Activated CD4-positive, alpha-beta memory T cell treated with anti-CD3 and anti-CD28 coated beads for 36 hours (primary cell): ENCODE measurements at regions of chr6 and their contacts with region 1.

Region 1: DNA sequence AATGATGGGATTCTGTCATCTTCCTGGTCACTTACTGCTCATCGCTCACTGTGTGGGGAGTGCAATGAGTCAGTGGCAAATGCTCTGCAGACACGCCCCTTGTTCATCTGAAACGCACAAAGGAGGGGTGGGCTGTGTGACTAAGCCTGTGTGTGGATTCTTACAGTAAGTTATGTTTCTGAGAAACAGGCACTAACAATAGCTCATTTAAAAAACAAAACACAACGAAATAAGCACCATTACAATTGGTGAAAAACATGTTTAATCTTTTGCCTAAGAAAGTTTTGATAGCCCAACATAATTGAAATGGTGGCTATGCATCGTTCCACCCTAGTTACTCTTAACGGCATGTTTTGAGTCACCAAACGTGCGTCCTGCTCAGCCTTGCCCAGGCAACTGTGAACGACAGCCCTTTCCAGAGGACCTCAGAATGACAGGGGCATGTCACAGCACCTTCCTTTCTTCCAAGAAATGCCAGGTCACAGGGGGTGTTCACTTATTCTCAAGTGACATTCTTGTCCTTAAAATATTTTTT is 118.4 kb upstream of the SGK1 start:
- DNase-seq: peak; percentile 89
- H3K4me3 Mint-ChIP-seq: peak overlapping the region; percentile 58
- H3K27ac Mint-ChIP-seq: peak overlapping the region; percentile 87
- H3K4me1 Mint-ChIP-seq: peaks cover 38% of the 10 kb centered on the region
- H3K27me3 Mint-ChIP-seq: no peaks in the 10 kb centered on the region

Region 2: GRCh38 chr6:132813173-132813856 is 1623.0 kb before region 1 on chr6:
- CTCF ChIA-PET with region 1: no interaction called
- POLR2A ChIA-PET with region 1: no interaction called
- intact Hi-C with region 1: loop called (anchors 2 kb)
- DNase-seq: peak; percentile 68
- H3K4me3 Mint-ChIP-seq: peak overlapping the region; percentile 97
- H3K27ac Mint-ChIP-seq: peak overlapping the region; percentile 98
- H3K4me1 Mint-ChIP-seq: peaks cover 28% of the 10 kb centered on the region
- H3K27me3 Mint-ChIP-seq: peaks cover 2% of the 10 kb centered on the region

Region 3: GRCh38 chr6:134235937-134236751 is 200.2 kb before region 1 on chr6:
- CTCF ChIA-PET with region 1: no interaction called
- POLR2A ChIA-PET with region 1: no interaction called
- intact Hi-C with region 1: loop called (anchors 1 kb)
- DNase-seq: peak; percentile 22
- H3K4me3 Mint-ChIP-seq: peak overlapping the region; percentile 29
- H3K27ac Mint-ChIP-seq: peak overlapping the region; percentile 85
- H3K4me1 Mint-ChIP-seq: peaks cover 41% of the 10 kb centered on the region
- H3K27me3 Mint-ChIP-seq: no peaks in the 10 kb centered on the region

Region 4: DNA sequence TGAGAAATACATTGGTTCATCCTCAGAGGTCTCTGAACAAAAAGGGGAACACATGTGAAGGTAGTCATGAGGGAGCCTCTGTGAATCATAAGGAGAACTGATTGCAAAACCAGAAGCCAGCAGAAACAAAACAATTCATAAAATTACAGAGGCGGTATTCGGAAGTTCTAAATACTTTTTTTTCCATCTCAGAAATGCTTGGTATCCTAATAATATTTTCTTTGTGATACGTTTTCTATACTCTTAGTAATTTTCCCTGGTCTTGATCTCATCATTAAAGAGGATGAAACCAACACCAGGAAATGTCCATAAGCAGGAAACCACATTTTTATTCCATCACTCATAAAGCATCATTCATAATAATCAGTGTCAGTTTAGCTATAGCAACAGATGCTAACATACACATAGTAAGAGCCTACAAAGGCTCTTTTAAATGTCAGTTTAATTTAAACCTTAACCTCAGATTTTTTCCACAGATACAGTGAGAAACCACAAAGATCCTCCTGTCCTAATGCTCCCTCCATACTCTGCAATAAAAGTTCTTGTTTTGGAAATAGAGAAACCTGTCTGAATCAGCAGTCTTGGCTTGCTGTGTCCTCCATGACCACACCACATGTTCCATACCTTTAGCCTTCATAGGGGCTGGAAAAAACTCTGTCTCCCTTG is 147.7 kb before region 1 on chr6:
- CTCF ChIA-PET with region 1: no interaction called
- POLR2A ChIA-PET with region 1: interaction called, 6 read pairs
- intact Hi-C with region 1: loop called (anchors 1 kb)
- DNase-seq: peak; percentile 15
- H3K4me3 Mint-ChIP-seq: peak overlapping the region; percentile 21
- H3K27ac Mint-ChIP-seq: peak overlapping the region; percentile 85
- H3K4me1 Mint-ChIP-seq: peaks cover 22% of the 10 kb centered on the region
- H3K27me3 Mint-ChIP-seq: no peaks in the 10 kb centered on the region

Region 5: GRCh38 chr6:134379086-134379485 is 57.3 kb before region 1 on chr6:
- CTCF ChIA-PET with region 1: interaction called, 3 read pairs
- POLR2A ChIA-PET with region 1: no interaction called
- intact Hi-C with region 1: loop called (anchors 1 kb)
- DNase-seq: peak; percentile 81
- H3K4me3 Mint-ChIP-seq: peak overlapping the region; percentile 27
- H3K27ac Mint-ChIP-seq: peak overlapping the region; percentile 83
- H3K4me1 Mint-ChIP-seq: peaks cover 32% of the 10 kb centered on the region
- H3K27me3 Mint-ChIP-seq: no peaks in the 10 kb centered on the region

Region 6: DNA sequence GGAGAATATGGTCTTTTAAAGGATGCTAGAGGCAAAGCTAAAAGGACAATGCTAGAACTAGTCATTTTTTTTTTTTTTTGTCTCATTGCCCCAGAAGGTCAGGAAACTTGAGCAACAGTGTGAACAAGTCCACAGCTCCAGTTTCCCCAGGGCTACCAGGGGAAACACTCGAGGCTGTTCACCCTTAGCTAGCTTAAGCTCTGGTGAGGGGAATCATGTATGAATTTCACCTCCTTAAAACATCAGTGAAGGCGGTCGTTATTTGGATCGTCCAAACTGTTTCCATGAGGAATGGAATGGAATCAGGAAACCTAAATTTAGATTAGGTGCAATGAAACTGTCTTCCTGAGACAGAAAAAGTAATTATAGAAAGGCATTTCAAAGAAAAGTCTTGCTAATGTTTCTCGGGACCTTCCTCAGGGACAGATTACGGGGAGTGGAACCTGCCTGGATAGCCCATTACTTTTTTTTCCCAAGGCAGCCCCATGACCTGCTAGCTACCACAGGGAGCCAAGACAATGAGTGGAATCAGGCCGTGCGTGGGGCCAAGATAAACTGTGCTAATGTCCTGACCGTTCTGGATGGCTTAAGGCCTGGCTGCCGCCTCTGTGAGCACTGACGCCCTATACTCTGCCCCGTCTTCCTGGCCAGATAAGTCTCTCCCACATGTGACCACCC is 46.4 kb after region 1 on chr6:
- CTCF ChIA-PET with region 1: no interaction called
- POLR2A ChIA-PET with region 1: no interaction called
- intact Hi-C with region 1: no loop called
- DNase-seq: no peak
- H3K4me3 Mint-ChIP-seq: no peak overlapping the region
- H3K27ac Mint-ChIP-seq: no peak overlapping the region
- H3K4me1 Mint-ChIP-seq: peaks cover 2% of the 10 kb centered on the region
- H3K27me3 Mint-ChIP-seq: no peaks in the 10 kb centered on the region

Region 7: GRCh38 chr6:134640975-134641429 is 204.7 kb after region 1 on chr6:
- CTCF ChIA-PET with region 1: interaction called, 21 read pairs
- POLR2A ChIA-PET with region 1: no interaction called
- intact Hi-C with region 1: loop called (anchors 1 kb)
- DNase-seq: peak; percentile 85
- H3K4me3 Mint-ChIP-seq: no peak overlapping the region
- H3K27ac Mint-ChIP-seq: no peak overlapping the region
- H3K4me1 Mint-ChIP-seq: peaks cover 32% of the 10 kb centered on the region
- H3K27me3 Mint-ChIP-seq: no peaks in the 10 kb centered on the region

Region 8: DNA sequence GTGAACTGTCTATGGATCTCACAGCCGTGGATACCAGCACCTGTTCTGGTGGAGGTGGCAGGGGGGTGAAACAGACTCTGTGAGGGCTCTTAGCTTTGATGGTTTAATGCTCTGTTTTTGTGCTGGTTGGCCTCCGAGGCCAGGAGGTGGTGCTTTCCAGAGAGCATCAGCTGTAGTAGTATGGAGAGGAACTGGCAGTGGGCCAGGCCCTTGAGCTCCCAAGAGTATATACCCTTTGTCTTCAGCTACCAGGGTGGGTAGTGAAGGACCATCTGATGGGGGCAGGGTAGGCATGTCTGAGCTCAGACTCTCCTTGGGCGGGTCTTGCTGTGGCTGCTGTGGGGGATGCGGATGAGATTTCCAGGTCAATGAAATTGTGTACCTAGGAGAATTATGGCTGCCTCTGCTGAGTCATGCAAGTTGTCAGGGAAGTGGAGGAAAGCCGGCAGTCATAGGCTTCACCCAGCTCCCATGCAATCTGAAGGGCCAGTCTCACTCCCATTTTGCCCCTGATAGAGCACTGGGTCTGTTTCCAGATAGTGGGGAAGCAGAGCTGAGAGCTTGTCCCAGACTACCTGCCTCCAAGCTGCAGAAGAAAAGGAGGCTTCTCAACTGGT is 1163.8 kb after region 1 on chr6:
- CTCF ChIA-PET with region 1: no interaction called
- POLR2A ChIA-PET with region 1: no interaction called
- intact Hi-C with region 1: no loop called
- DNase-seq: no peak
- H3K4me3 Mint-ChIP-seq: no peak overlapping the region
- H3K27ac Mint-ChIP-seq: no peak overlapping the region
- H3K4me1 Mint-ChIP-seq: peaks cover 2% of the 10 kb centered on the region
- H3K27me3 Mint-ChIP-seq: peaks cover 5% of the 10 kb centered on the region